ENCODE measurements at regions of chr11 and their contacts with region 1.

Region 1: DNA sequence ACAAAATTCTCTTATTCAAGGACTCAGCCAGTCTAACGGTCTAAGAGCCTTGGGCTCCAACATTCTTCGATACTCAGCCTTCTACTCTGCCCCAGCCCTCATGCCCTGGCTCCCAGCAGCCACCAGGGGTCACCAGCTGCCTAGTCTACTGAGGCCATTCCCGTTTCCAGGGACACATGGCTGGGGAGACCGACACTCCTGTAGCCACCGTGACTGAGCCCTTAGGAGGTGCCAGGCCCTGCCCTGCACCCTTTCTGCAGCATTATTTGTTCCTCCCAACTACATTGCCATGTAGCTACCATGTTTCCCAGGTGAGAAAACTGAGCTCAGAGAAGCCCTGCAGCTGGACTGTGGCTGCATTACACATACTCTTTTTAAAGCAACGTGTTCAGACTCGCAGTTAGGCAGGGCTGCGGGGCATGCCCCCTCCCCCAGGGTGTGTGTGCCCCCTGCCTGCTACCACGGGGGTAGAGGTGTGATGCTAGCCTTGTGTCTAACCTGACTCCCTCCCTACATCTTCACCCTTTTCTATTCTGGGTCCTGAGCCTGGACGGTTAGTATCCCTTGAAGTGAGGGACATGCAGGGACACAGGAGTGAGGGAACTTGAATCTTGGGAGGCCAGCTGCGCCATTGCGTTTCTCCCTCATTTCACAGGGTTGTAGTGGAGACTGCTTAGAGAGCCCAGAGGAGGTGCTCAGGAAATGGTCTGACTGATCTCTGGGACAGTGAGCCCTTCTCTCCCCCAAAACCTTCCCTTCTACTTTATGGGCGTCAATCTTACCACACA is 17.5 kb downstream of the ATG16L2 start:
- DNase-seq: no peak
- CTCF ChIP-seq: peak; percentile 87

Region 2: DNA sequence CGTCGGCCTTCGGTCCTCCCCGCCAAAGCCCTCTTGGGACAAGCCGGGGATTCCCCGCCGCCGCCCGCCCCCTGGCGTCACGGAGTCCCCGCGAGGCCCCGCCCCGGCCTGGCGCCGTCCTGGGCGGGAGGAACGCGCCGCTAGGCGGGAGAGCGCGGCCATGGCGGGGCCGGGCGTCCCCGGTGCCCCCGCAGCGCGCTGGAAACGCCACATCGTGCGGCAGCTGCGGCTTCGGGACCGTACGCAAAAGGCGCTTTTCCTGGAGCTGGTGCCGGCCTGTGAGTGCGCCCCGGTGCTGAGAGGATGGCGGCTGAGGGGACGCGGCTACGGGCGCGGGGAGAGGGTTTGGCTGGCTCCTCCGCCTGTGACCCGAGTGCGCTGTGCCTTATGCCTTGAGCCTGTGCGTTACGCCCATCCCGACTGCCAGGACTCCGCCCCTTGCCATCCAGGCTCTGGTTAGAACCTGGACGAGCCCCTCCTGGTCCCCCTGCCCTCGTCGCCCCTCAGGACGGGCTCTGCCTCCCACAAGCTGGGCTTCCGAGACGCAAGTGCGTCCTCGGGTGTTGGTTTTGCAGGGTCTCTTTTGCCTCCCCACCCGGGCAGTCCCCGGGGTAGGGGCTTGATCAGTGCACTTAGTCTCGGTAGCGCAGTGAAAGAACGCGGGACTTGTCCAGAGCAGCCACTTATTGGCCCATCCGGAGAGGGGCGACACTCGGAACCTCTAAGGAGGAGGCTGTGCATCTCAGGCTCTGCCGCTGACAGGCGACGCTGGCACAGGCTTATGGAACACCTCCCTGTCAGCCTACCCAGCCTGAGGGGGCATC is 17.2 kb before region 1 on chr11 and contains the start of gene ATG16L2:
- CTCF ChIA-PET with region 1: interaction called, 11 read pairs
- POLR2A ChIA-PET with region 1: interaction called, 3 read pairs
- DNase-seq: peak; percentile 95
- CTCF ChIP-seq: peak; percentile 25

Region 3: DNA sequence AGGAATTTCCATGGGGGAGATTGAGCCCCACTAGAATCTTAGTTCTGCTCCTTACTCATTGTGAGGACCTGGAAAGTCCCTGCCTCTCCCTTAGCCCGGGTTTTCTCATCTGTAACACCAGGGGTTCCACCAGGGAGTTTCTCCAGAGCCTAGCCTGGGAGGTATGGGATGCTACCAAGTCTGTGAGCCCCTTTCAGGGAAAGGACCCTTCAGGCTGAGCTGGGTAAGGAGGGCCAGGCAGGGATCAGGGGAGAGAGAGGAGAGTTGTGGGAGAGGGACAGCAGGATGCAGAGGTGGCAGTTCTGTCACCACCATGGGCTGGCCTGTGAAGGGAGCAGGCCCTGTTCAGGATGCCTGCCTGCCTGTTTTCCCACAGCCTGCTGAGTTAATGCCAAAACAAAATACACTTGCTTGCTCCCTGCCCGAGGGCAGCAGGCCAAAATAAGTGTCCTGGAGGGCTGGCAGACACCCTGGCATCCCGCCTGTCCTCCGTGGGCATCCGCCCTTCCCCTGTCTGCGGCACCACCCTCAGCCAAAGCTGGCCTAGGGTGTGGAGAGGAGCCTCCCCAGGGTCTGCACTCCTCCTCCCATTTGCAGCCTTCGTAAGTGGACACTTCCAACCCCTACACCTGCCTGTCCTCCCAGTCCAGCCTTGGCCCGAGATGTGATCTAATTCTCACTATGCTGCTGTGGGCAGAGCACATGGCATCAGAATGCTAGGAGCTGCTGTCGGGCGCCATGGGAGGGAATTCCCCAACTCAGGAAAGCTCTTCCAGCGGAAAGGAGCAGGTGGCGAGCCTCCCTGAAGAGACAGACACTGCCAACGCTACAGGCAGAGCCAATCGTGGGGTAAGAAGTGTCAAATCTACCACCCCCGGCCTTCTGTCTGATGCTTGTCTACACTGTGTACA is 316.3 kb after region 1 on chr11:
- CTCF ChIA-PET with region 1: interaction called, 10 read pairs
- POLR2A ChIA-PET with region 1: no interaction called
- DNase-seq: no peak
- CTCF ChIP-seq: no peak

Region 4: DNA sequence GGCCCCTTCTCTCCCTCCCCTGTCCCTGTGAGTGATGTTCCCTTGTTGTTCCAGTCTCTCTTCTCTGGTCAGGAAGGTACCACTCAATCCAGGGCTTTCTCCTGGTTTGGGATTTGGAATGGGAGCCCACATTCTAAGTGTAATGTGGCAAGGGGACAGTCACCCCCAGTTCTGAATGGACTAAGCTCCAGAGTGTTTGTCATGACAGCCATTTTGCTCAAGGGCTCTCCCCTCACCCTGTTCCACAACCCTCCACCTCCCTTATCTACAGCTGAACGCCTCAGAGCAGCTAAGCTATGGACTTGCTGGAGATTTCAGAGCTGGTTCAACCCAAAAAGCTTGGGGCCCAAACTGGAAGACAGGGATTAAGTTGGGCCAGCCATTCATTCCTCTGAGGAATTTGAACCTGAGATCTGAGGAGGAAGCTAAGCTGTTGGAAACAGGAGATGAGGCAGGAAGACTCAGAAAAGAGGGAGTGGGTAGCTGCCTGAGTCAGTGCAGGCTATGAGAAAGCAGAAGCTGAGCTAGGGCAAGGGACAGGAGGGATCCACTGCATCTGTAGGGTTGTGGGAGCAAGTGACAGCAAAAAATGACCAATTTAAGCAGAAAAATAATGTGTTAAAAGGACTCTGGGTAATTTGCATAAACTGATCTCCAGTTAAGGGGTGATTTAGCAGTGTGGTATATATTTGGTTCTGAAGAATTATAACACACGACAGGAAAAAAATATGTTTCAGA is 333.3 kb after region 1 on chr11:
- CTCF ChIA-PET with region 1: interaction called, 14 read pairs
- POLR2A ChIA-PET with region 1: no interaction called
- DNase-seq: no peak
- CTCF ChIP-seq: no peak